Right ventricle myocardium inferior (tissue), 1 donor: ENCODE measurements at regions of chr3 and their contacts with region 1.

Region 1: GRCh38 chr3:132730891-132731580 is 8.8 kb upstream of the NPHP3 start:
- DNase-seq: no peak
- ATAC-seq: peak; percentile 70

Region 2: DNA sequence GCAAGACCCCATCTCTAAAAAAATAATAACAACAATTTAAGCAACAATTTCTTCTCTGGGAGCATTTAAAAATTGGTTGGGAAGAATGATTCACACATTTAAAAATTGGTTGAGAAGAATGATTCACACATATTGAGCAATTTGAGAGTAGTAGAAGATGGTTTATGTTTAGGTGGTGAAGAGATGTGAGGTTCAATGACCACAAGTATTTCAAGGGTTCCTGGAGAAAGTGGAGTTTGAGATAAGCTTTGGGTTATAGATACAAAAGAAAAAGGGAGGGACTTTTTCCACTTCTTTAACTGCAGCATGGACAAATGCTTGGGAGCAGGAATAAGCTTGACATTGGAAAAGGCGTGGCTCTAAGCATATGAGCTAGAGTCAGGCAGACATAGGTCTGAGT is 136.9 kb after region 1 on chr3:
- intact Hi-C with region 1: no loop called
- DNase-seq: no peak
- ATAC-seq: peak; percentile 28

Region 3: DNA sequence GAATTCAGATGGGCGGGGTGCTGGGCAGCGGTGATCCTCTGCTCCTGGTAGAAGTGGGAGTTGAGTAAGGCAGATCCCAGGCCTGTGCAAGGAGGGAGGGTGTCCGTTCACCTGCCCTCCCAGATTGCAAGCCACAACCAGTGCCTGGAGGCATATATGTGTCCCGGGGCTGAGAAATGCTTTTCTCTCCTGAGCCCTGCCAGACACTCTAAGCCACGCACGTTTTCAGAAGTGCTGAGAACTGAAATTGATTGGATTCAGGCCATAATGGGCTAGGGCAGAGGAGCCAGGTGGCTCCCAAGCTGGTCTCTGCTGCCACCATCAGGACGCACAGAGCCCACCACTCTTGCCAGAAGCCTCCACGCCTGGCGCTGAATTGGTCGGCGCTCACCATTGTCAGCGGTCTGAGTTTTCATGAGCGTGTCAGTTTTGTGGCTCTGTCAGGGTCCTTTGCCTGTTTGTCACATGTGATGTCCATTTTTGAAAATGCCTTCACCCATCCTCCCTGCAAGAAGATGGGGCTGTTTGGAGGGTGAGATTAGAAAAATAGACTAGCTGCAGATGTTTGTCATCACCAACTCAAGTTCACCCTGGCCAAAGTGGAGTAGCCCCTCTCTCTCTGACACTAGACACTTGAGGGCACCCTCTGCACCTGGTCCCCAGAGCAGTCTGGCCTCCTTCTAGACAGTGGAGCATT is 653.4 kb after region 1 on chr3:
- intact Hi-C with region 1: loop called (anchors 2 kb)
- DNase-seq: no peak
- ATAC-seq: peak; percentile 83

Region 4: GRCh38 chr3:133426721-133427120 is 695.7 kb after region 1 on chr3:
- intact Hi-C with region 1: loop called (anchors 1 kb)
- DNase-seq: no peak
- ATAC-seq: no peak